Common myeloid progenitor, CD34-positive (primary cell): ENCODE measurements at regions of chr2 and their contacts with region 1.

Region 1: DNA sequence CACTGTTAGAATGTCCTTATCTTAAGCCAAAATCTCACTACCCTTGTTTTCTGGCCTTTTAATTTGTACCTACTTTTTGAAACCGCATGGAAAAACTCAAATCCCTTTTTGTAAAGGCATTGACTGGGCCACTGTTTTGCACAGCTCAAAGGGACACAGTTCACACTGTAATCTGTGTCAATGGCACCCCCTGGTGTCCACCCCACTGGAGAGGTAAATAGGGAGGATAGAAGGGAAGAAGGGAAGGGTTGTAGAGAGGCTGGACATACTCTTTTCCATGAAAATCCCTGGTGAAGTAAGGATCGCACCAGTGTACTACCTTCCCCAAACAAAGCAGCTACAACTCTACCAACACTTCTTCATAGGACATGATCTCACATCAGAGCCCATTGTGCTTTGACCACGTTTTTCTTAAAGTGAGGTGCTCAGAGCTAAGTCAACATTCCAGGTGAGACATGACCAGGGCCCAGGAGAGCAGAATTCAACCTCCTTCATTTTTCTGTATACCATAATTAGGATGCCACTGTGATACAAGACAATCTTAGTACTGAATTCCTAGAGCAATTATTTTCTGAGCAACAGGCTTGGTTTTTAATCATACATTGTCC is 92.4 kb upstream of the RMDN2 start:
- DNase-seq: peak; percentile 80 to 83 (median 80)
- H3K4me3 ChIP-seq: no peak overlapping the region
- H3K27ac ChIP-seq: no peak overlapping the region
- H3K4me1 ChIP-seq: peaks cover 18 to 41% (median 31%) of the 10 kb centered on the region in 4 experiments
- H3K27me3 ChIP-seq: no peaks in the 10 kb centered on the region

Region 2: DNA sequence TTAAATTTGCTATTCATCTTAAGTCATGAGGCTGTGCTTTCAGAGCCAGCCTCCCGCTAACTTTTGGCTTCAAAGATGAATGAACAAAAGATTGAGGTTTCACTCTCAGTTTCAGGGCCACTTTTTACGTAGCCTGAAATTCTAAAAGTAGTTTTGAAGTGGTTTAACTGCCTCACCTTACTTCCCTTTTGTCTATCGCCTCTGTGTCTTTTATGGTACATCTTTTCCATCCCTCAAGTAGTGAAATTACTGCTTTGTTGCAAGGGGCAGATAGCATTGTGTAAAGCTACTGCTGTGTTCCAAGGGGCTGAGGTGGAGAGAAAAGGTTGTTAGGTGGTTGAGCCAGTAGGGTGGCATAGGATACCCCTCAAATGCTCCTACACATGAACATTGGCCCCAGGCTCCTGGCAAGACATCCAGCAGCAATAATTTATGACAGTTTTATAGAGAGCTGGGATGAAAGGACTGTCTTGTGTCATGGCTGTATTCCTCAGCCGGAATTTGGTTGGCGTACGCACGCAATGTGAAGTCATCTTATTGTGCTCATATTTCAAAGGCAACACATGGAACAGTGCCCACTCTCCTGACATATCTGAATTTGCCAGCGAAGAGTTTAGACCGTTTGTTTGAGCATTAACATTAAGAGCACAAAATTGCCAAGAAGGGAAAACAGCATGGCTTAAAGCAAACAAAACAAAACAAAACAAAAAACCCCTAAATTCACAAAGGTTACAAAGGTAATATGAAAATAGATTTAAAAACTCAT is 456.1 kb before region 1 on chr2:
- CTCF ChIA-PET with region 1: no interaction called
- POLR2A ChIA-PET with region 1: no interaction called
- DNase-seq: no peak
- H3K4me3 ChIP-seq: no peak overlapping the region
- H3K27ac ChIP-seq: no peak overlapping the region
- H3K4me1 ChIP-seq: peaks cover 0 to 6% (median 0%) of the 10 kb centered on the region in 4 experiments
- H3K27me3 ChIP-seq: no peaks in the 10 kb centered on the region

Region 3: DNA sequence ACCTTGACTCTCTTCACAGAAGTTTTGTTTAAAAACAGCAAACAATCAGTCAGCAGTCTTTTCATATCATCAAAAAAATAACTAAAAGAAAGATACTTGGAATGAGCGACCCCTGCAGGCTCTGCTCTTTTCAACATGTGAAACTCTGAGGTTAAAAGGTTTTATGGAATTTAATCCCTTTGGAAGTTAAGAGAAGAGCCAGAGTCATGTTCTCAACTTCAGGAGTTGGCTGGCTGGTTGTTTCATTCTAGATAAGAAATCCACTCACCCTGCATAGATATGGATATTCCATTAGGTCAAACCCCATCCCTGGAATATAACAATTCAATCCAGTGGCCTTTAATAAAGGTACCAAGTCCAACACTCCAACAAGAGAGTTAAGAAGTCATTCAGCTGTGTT is 23.2 kb before region 1 on chr2:
- CTCF ChIA-PET with region 1: interaction called, 10 read pairs
- POLR2A ChIA-PET with region 1: no interaction called
- DNase-seq: peak; percentile 19 to 49 (median 41)
- H3K4me3 ChIP-seq: no peak overlapping the region
- H3K27ac ChIP-seq: no peak overlapping the region
- H3K4me1 ChIP-seq: peaks cover 5 to 11% (median 8%) of the 10 kb centered on the region in 4 experiments
- H3K27me3 ChIP-seq: no peaks in the 10 kb centered on the region

Region 4: DNA sequence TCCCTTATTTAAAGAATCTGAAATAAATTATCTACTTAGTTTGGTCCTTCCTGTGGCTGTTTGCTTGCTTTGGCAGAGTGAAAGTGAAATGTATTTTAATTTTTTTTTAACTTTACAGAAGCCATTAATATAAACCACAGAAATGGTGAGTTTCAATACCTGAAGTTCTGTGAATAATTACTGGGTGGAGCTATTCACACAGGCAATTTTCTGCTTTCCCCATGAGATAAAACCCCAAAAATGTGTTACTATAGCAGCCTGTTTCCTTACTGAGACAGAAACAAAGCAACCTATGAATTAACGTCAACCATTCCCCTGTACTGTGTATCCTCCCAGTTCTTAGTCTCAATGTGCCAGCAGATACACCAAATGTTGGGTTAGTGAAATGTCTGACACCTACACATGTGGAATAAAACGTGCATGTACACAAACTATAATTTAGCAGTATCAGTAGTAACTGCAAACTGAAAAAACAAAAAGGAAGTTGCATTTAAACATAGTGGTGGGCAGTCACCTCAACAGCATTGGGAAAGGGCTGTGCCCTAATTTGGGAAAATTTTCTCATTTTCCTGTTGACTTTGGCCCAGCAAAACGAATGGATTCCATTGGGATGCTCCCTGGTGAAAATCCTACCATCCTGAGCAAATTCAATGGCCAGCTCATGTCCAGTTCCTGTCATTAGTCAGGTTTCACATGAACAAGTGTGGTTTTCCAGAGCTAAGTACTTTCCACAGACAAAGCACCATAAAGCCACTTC is 19.3 kb after region 1 on chr2:
- CTCF ChIA-PET with region 1: interaction called, 21 read pairs
- POLR2A ChIA-PET with region 1: no interaction called
- DNase-seq: peak; percentile 42 to 83 (median 71)
- H3K4me3 ChIP-seq: peak overlapping the region in 1 of 7 experiments; percentile 43
- H3K27ac ChIP-seq: peak overlapping the region; percentile 37 to 70
- H3K4me1 ChIP-seq: peaks cover 19 to 68% (median 60%) of the 10 kb centered on the region in 4 experiments
- H3K27me3 ChIP-seq: no peaks in the 10 kb centered on the region